ENCODE measurements at regions of chr2 and their contacts with region 1.

Region 1: GRCh38 chr2:191566344-191566743 is 111.6 kb upstream of the NABP1 start:
- DNase-seq: no peak
- ATAC-seq: no peak

Region 2: GRCh38 chr2:191318729-191319078 is 247.6 kb before region 1 on chr2:
- intact Hi-C with region 1: no loop called
- DNase-seq: no peak
- ATAC-seq: peak; percentile 33

Region 3: GRCh38 chr2:191666732-191667131 is 100.4 kb after region 1 on chr2:
- intact Hi-C with region 1: no loop called
- DNase-seq: no peak
- ATAC-seq: no peak

Region 4: DNA sequence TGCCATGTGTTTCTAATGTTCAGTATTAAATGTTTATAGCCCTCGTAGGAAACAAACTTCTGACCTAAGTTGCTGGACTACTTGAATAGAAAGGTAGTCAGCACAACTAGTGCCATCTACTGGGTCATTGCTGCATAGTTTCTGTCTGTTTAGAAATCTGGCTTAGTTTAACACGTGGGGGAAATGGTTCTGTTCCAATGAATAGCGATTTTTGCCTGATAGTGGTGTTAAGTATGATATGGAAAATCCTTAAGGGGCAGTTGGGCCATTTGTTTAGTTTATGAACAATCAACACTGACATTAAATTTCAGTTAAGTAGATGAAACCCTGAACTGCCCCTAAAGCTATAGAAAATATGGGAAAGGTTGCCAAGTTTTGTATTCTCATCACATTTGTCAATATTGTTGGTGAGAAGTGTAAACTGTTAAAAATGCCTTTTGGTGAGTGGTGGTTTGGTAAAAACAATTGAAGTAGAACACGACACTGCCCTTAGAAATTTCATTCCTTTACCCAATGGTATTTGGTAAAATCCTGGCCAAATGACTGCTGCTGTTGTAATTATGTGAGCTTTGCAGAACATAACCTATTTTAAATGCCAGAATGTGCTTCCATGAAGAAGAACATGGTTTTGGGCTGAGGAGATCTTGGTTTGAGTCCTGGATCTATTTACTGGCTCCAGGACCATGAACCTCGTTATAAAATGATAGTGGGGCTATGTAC is 124.8 kb after region 1 on chr2:
- intact Hi-C with region 1: loop called (anchors 5 kb)
- DNase-seq: no peak
- ATAC-seq: peak; percentile 83

Region 5: GRCh38 chr2:192162392-192163042 is 596.2 kb after region 1 on chr2:
- intact Hi-C with region 1: loop called (anchors 10 kb)
- DNase-seq: no peak
- ATAC-seq: peak; percentile 75

Measured in Right ventricle myocardium inferior (tissue), 1 donor.